ENCODE measurements at regions of chr13 and their contacts with region 1.

Region 1: GRCh38 chr13:86313421-86313820 is 514.2 kb upstream of the SLITRK6 start:
- DNase-seq: no peak
- H3K4me3 ChIP-seq: no peak overlapping the region
- H3K27ac ChIP-seq: no peak overlapping the region
- H3K4me1 ChIP-seq: no peaks in the 10 kb centered on the region
- CTCF ChIP-seq: no peak

Region 2: DNA sequence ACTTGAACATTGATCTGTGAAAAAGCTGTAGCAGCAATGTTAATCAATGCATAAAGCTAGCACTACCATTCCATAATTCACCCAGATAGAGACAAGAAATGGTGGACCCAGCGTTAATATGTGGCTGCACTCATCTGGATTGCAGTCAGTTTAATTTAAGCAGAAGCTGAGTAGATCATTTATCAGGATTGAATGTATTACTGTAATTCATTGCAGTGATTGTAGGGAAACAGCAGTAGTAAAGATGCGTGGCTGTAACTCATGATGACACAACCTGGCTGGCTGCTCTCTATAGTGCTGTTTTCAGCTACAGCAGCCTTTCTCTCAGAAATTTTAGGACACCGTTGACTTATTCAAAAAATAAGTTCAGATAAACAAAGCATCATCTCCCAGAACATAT is 14.7 kb before region 1 on chr13:
- CTCF ChIA-PET with region 1: no interaction called
- POLR2A ChIA-PET with region 1: interaction called, 4 read pairs
- intact Hi-C with region 1: loop called (anchors 1 kb)
- DNase-seq: no peak
- H3K4me3 ChIP-seq: no peak overlapping the region
- H3K27ac ChIP-seq: no peak overlapping the region
- H3K4me1 ChIP-seq: no peaks in the 10 kb centered on the region
- CTCF ChIP-seq: no peak

Measured in OCI-LY7 (cell line).